WTC11 (cell line): ENCODE measurements at regions of chr11 and their contacts with region 1.

Region 1: GRCh38 chr11:8018484-8019313 is 31.6 kb downstream of the EIF3F start:
- DNase-seq: peak; percentile 74
- ATAC-seq: peak; percentile 59
- H3K4me3 Mint-ChIP-seq: peak overlapping the region; percentile 75
- H3K27ac Mint-ChIP-seq: no peak overlapping the region
- H3K4me1 Mint-ChIP-seq: peaks cover 32% of the 10 kb centered on the region
- H3K27me3 Mint-ChIP-seq: peaks cover 81% of the 10 kb centered on the region
- CTCF ChIP-seq: no peak

Region 2: GRCh38 chr11:7994581-7995278 is 24.0 kb before region 1 on chr11:
- CTCF ChIA-PET with region 1: no interaction called
- POLR2A ChIA-PET with region 1: no interaction called
- DNase-seq: no peak
- ATAC-seq: no peak
- H3K4me3 Mint-ChIP-seq: no peak overlapping the region
- H3K27ac Mint-ChIP-seq: no peak overlapping the region
- H3K4me1 Mint-ChIP-seq: no peaks in the 10 kb centered on the region
- H3K27me3 Mint-ChIP-seq: no peaks in the 10 kb centered on the region
- CTCF ChIP-seq: no peak

Region 3: GRCh38 chr11:8056810-8057463 is 38.2 kb after region 1 on chr11:
- CTCF ChIA-PET with region 1: interaction called, 26 read pairs
- POLR2A ChIA-PET with region 1: no interaction called
- DNase-seq: no peak
- ATAC-seq: no peak
- H3K4me3 Mint-ChIP-seq: no peak overlapping the region
- H3K27ac Mint-ChIP-seq: peak overlapping the region; percentile 37; the same call in 1 of the 2 replicates
- H3K4me1 Mint-ChIP-seq: peaks cover 14% of the 10 kb centered on the region
- H3K27me3 Mint-ChIP-seq: no peaks in the 10 kb centered on the region
- CTCF ChIP-seq: no peak

Region 4: DNA sequence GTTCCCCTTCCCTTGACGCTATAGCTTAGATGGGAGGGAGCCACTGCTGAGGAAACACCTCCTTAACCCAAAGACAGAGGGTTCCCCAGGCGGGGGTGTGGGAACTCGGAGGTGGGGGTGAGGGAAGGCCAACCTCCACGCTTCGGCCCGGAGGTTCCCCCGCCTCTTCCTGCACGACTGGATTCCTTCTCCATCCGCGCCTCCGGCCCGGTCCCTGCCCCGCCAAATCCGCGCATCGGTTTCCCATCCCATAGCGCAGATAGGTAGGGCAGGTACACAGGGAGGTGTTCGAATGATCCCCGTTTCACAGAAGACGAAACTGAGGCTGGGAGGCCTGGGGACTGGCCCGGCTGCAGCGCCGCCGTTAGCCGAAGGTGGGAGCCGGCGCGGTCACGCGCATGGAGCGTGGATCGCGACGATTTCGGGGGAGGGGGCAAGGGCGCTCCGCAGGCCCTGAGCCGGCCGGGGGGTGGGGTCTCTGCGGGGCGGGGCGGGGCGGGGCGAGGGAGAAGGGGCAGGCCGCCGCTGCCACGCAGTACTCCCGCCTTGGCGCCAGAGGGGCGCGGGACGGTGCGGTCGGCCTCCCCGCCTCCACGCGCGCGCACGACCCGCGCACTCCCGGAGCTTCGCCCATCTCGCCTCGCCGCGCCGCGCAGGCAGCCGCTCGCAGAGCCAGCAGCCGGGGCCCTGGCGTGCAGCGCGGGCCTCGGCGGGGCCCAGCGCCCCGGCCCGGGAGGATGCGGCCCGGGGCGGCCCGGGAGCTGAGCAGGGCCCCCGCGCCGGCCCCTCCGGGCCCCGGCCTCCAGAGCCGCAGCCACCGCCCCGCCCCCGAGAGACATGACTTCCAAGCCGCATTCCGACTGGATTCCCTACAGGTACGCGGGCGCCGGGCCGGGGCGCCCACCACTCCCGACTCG is 62.2 kb after region 1 on chr11 and contains the start of gene TUB:
- CTCF ChIA-PET with region 1: interaction called, 20 read pairs
- POLR2A ChIA-PET with region 1: no interaction called
- DNase-seq: peak; percentile 70
- ATAC-seq: peak; percentile 44
- H3K4me3 Mint-ChIP-seq: peak within 1 kb of the TSS; percentile 79
- H3K27ac Mint-ChIP-seq: no peak within 1 kb of the TSS
- H3K4me1 Mint-ChIP-seq: peaks cover 48% of the 10 kb centered on the region
- H3K27me3 Mint-ChIP-seq: peaks cover 42% of the 10 kb centered on the region
- CTCF ChIP-seq: no peak
- total RNA-seq, gene TUB: 29.2 to 32.1 TPM (median 30.0 TPM) in 3 replicates

Region 5: GRCh38 chr11:8087185-8087584 is 68.5 kb after region 1 on chr11:
- CTCF ChIA-PET with region 1: interaction called, 58 read pairs
- POLR2A ChIA-PET with region 1: interaction called, 4 read pairs
- DNase-seq: peak; percentile 59
- ATAC-seq: peak; percentile 29
- H3K4me3 Mint-ChIP-seq: no peak overlapping the region
- H3K27ac Mint-ChIP-seq: no peak overlapping the region
- H3K4me1 Mint-ChIP-seq: peaks cover 52% of the 10 kb centered on the region
- H3K27me3 Mint-ChIP-seq: peaks cover 3% of the 10 kb centered on the region; the same call in 1 of the 2 replicates
- CTCF ChIP-seq: 0 out of 2 replicates have a peak, but pooled peaks have one; percentile 14